GM12878 (cell line): ENCODE measurements at regions of chr10 and their contacts with region 1.

Region 1: GRCh38 chr10:82811621-82812020 is 936.6 kb downstream of the NRG3 start:
- DNase-seq: no peak
- ATAC-seq: peak; percentile 71
- H3K4me3 ChIP-seq: no peak overlapping the region
- H3K27ac ChIP-seq: no peak overlapping the region
- H3K4me1 ChIP-seq: no peaks in the 10 kb centered on the region
- H3K27me3 ChIP-seq: no peaks in the 10 kb centered on the region
- CTCF ChIP-seq: peak; percentile 27 to 63 (median 53); a peak in 5 of 6 replicates
- EP300 ChIP-seq: no peak
- POLR2A ChIP-seq: no peak
- RAD21 ChIP-seq: peak; percentile 55; the same call in 1 of the 2 replicates

Region 2: DNA sequence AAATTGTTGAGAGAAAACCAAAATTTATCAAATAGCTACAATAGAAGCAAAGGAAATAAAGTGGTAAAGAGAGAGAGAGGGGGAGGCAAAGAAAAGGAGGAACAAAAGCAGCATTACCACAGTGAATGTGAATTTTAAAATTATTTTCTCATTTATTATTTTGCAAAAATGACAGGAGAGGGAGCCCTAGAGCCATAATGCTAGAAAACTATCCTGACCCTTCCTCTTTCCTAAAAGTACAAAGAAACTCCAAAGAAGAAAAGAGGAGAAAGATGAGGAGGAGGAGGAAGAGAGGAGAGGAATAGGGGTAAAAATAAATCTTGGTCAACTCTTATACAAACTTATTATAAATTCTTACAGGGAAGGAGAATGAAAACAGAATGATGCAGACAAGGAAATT is 15.1 kb before region 1 on chr10:
- CTCF ChIA-PET with region 1: interaction called, 13 read pairs
- POLR2A ChIA-PET with region 1: no interaction called
- RAD21 ChIA-PET with region 1: interaction called, 3 read pairs
- SMC1A ChIA-PET with region 1: interaction called, 17 read pairs
- in situ Hi-C with region 1: no loop called
- intact Hi-C with region 1: no loop called
- DNase-seq: no peak
- ATAC-seq: peak; percentile 77
- H3K4me3 ChIP-seq: no peak overlapping the region
- H3K27ac ChIP-seq: no peak overlapping the region
- H3K4me1 ChIP-seq: no peaks in the 10 kb centered on the region
- H3K27me3 ChIP-seq: no peaks in the 10 kb centered on the region
- CTCF ChIP-seq: peak; percentile 17 to 47 (median 22); a peak in 3 of 6 replicates
- EP300 ChIP-seq: no peak
- POLR2A ChIP-seq: no peak
- RAD21 ChIP-seq: peak; percentile 79

Region 3: DNA sequence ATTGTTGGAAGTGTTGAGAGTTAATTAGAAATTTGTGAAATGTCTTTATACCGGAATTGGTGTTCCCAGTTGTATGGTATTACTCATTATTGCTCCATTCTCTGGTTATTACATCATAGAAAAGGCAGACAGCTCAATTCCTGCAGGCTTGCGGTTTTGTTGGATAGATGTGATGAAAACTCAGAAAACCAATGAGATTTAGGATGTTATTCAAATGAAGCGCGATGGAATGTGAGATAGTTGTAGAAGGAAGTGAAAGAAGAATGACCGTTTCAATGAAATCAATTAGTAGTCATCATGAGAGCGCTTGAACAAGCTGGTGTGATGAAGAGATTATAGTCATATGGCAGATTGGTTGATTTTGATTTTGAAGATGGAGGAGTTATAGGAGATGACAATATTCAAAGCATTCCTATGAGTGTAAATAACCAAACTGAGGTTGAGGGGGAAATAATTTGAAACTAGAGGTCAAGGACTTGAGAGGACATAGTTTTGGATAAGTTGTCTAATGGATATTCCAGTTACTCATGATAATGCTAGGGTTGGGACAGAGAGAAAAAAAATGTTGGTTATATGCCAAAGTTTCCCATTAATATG is 54.9 kb after region 1 on chr10:
- CTCF ChIA-PET with region 1: interaction called, 4 read pairs
- POLR2A ChIA-PET with region 1: no interaction called
- RAD21 ChIA-PET with region 1: no interaction called
- SMC1A ChIA-PET with region 1: interaction called, 3 read pairs
- in situ Hi-C with region 1: no loop called
- intact Hi-C with region 1: loop called (anchors 5 kb)
- DNase-seq: no peak
- ATAC-seq: peak; percentile 52
- H3K4me3 ChIP-seq: no peak overlapping the region
- H3K27ac ChIP-seq: no peak overlapping the region
- H3K4me1 ChIP-seq: no peaks in the 10 kb centered on the region
- H3K27me3 ChIP-seq: no peaks in the 10 kb centered on the region
- CTCF ChIP-seq: no peak
- EP300 ChIP-seq: no peak
- POLR2A ChIP-seq: no peak
- RAD21 ChIP-seq: no peak

Region 4: DNA sequence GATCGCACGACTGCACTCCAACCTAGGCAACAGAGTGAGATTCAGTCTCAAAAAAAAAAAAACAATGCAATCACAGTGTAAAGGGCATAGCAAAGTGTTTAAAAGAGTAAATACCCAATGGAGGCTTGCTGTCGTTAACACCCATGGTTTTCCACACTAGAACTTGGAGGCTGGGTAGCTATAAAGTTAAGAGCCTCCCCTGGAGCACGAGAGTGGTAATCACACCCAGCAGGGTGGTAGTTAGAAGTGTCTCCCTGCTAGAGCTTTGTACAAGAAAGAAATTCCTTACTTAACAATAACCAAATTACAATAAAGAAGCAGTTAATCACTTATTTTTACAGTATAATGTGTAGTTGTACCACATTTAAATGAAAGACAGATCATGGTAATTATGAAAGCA is 142.3 kb after region 1 on chr10:
- CTCF ChIA-PET with region 1: interaction called, 19 read pairs
- POLR2A ChIA-PET with region 1: no interaction called
- RAD21 ChIA-PET with region 1: interaction called, 4 read pairs
- SMC1A ChIA-PET with region 1: interaction called, 7 read pairs
- in situ Hi-C with region 1: no loop called
- intact Hi-C with region 1: no loop called
- DNase-seq: no peak
- ATAC-seq: peak; percentile 59
- H3K4me3 ChIP-seq: no peak overlapping the region
- H3K27ac ChIP-seq: no peak overlapping the region
- H3K4me1 ChIP-seq: no peaks in the 10 kb centered on the region
- H3K27me3 ChIP-seq: no peaks in the 10 kb centered on the region
- CTCF ChIP-seq: peak in 1 of 3 experiments; percentile 24; a peak in 1 of 6 replicates
- EP300 ChIP-seq: no peak
- POLR2A ChIP-seq: no peak
- RAD21 ChIP-seq: peak; percentile 36; the same call in 1 of the 2 replicates

Region 5: GRCh38 chr10:83991986-83992753 is 1180.5 kb after region 1 on chr10:
- CTCF ChIA-PET with region 1: no interaction called
- POLR2A ChIA-PET with region 1: no interaction called
- RAD21 ChIA-PET with region 1: no interaction called
- SMC1A ChIA-PET with region 1: no interaction called
- in situ Hi-C with region 1: no loop called
- intact Hi-C with region 1: loop called (anchors 10 kb)
- DNase-seq: peak; percentile 55
- ATAC-seq: peak; percentile 67
- H3K4me3 ChIP-seq: no peak overlapping the region
- H3K27ac ChIP-seq: peak overlapping the region; percentile 22
- H3K4me1 ChIP-seq: peaks cover 25% of the 10 kb centered on the region
- H3K27me3 ChIP-seq: no peaks in the 10 kb centered on the region; a peak in 1 of 4 replicates
- CTCF ChIP-seq: peak; percentile 60 to 66 (median 63)
- EP300 ChIP-seq: no peak
- POLR2A ChIP-seq: no peak
- RAD21 ChIP-seq: peak; percentile 55